Activated naive CD4-positive, alpha-beta T cell treated with anti-CD3 and anti-CD28 coated beads for 36 hours (primary cell): ENCODE measurements at regions of chr7 and their contacts with region 1.

Region 1: GRCh38 chr7:113698556-113699220 is 220.1 kb downstream of the PPP1R3A start:
- DNase-seq: no peak
- H3K4me3 Mint-ChIP-seq: no peak overlapping the region
- H3K27ac Mint-ChIP-seq: no peak overlapping the region
- H3K4me1 Mint-ChIP-seq: no peaks in the 10 kb centered on the region
- H3K27me3 Mint-ChIP-seq: no peaks in the 10 kb centered on the region

Region 2: DNA sequence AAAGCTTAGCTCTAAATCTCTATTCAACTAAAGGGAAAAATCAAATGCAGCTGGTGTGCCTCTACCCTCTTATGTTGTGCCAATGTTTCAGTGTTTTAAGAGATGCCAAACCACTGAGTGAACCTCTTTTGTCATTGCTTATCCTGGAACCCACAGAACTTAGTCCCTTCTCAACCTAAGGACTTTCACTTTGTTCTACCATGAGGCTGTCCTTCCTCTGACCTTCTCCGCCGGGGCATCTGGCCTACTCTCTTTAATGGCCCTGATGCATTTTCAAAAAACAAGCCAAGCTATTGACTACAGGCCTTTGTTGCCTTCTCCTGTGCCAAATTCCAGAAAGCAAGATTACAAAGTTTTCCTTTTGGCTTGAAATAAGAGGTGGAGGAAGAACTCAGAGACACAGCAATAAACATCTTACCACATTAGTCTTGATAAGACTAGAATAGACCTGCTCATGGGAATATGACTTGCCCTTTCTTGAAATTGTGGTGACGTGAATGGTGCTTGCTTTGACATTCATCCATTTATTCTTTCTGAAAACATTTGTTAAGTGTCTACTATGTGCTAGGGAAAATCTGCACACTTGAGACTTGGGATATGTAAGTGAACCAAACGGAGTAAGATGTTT is 327.2 kb before region 1 on chr7:
- CTCF ChIA-PET with region 1: no interaction called
- intact Hi-C with region 1: no loop called
- DNase-seq: no peak
- H3K4me3 Mint-ChIP-seq: no peak overlapping the region
- H3K27ac Mint-ChIP-seq: no peak overlapping the region
- H3K4me1 Mint-ChIP-seq: no peaks in the 10 kb centered on the region
- H3K27me3 Mint-ChIP-seq: peaks cover 4% of the 10 kb centered on the region

Region 3: GRCh38 chr7:113404245-113404644 is 294.4 kb before region 1 on chr7:
- CTCF ChIA-PET with region 1: no interaction called
- intact Hi-C with region 1: loop called (anchors 2 kb)
- DNase-seq: no peak
- H3K4me3 Mint-ChIP-seq: no peak overlapping the region
- H3K27ac Mint-ChIP-seq: no peak overlapping the region
- H3K4me1 Mint-ChIP-seq: no peaks in the 10 kb centered on the region
- H3K27me3 Mint-ChIP-seq: peaks cover 19% of the 10 kb centered on the region